HepG2 (cell line): ENCODE measurements at regions of chr6 and their contacts with region 1.

Region 1: DNA sequence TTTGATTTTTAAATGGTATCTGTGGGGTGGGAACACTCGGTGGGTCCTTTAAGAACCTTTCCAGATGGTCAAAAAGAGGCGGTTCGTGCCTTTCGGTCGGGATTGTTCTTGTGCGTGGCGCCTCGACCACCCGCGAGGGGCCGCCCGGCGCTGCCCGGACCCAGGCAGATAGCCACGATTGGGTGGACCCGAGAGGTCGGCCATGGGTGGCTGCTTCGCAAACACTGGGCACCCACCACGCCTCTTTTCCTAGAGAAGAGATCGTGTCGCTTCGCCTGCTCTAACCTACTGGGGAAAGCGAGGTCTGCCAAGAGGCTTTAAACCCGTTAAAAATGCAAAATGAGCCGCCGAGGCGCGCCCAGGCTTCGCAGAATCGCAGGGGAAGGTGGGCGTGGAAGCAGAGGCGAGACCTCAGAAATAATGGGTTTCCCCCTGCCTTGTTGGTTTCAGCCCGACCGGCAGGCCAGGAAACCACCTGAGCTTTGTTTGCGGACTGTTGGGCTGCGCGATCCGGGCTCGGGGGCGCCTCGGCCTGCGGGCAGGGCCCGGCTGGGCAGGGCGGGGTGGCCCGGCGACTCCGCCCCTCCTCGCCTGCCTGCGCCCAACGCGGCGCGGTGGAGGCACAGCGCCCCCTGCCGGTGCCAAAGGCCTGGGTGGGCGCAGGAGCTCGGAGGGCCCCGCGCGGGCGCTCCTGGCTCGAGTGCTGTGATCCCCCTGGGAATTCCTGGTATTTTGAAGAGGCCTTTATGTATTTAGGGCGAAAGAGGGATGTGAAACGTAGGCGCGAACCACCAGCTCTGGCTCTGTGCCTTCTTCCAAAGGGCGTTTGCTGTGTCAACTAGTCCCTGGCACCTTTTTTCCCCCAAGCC is 1.6 kb downstream of the MARCKS start:
- DNase-seq: peak; percentile 89
- ATAC-seq: peak; percentile 91
- H3K4me3 ChIP-seq: peak overlapping the region; percentile 88 to 100 (median 97)
- H3K27ac ChIP-seq: peak overlapping the region; percentile 98
- H3K4me1 ChIP-seq: peaks cover 39% of the 10 kb centered on the region
- H3K27me3 ChIP-seq: peaks cover 0 to 8% of the 10 kb centered on the region in 2 experiments; a peak in 3 of 5 replicates
- CTCF ChIP-seq: peak; percentile 89
- EP300 ChIP-seq: peak; percentile 41 to 63; a peak in 3 of 4 replicates
- POLR2A ChIP-seq: peak; percentile 75 to 76; a peak in 3 of 4 replicates
- RAD21 ChIP-seq: peak; percentile 99

Region 2: GRCh38 chr6:112879920-112880413 is 978.7 kb before region 1 on chr6:
- CTCF ChIA-PET with region 1: no interaction called
- POLR2A ChIA-PET with region 1: interaction called, 13 read pairs
- in situ Hi-C with region 1: no loop called
- intact Hi-C with region 1: loop called (anchors 2 kb)
- DNase-seq: peak; percentile 85
- ATAC-seq: peak; percentile 100
- H3K4me3 ChIP-seq: peak overlapping the region; percentile 57 to 79 (median 79)
- H3K27ac ChIP-seq: no peak overlapping the region
- H3K4me1 ChIP-seq: 0 out of 2 replicates have a peak, but pooled peaks cover 6% of the 10 kb centered on the region
- H3K27me3 ChIP-seq: no peaks in the 10 kb centered on the region; a peak in 1 of 5 replicates
- CTCF ChIP-seq: peak; percentile 99
- EP300 ChIP-seq: no peak
- POLR2A ChIP-seq: peak; percentile 30 to 73; a peak in 2 of 4 replicates
- RAD21 ChIP-seq: peak; percentile 97

Region 3: GRCh38 chr6:113352029-113352801 is 506.5 kb before region 1 on chr6:
- CTCF ChIA-PET with region 1: no interaction called
- POLR2A ChIA-PET with region 1: interaction called, 44 read pairs
- in situ Hi-C with region 1: loop called (anchors 5 kb)
- intact Hi-C with region 1: loop called (anchors 2 kb)
- DNase-seq: peak; percentile 100
- ATAC-seq: peak; percentile 94
- H3K4me3 ChIP-seq: peak overlapping the region in 1 of 3 experiments; percentile 20; a peak in 1 of 6 replicates
- H3K27ac ChIP-seq: peak overlapping the region; percentile 91
- H3K4me1 ChIP-seq: peaks cover 75% of the 10 kb centered on the region
- H3K27me3 ChIP-seq: no peaks in the 10 kb centered on the region; a peak in 1 of 5 replicates
- CTCF ChIP-seq: no peak
- EP300 ChIP-seq: peak; percentile 97 to 100
- POLR2A ChIP-seq: no peak
- RAD21 ChIP-seq: no peak

Region 4: GRCh38 chr6:113564371-113565161 is 294.1 kb before region 1 on chr6:
- CTCF ChIA-PET with region 1: no interaction called
- POLR2A ChIA-PET with region 1: no interaction called
- in situ Hi-C with region 1: no loop called
- intact Hi-C with region 1: loop called (anchors 5 kb)
- DNase-seq: peak; percentile 74
- ATAC-seq: peak; percentile 99
- H3K4me3 ChIP-seq: peak overlapping the region in 2 of 3 experiments; percentile 8 to 19; a peak in 3 of 6 replicates
- H3K27ac ChIP-seq: peak overlapping the region; percentile 50
- H3K4me1 ChIP-seq: peaks cover 19% of the 10 kb centered on the region
- H3K27me3 ChIP-seq: no peaks in the 10 kb centered on the region; a peak in 1 of 5 replicates
- CTCF ChIP-seq: no peak
- EP300 ChIP-seq: peak in 1 of 2 experiments; percentile 85; a peak in 2 of 4 replicates
- POLR2A ChIP-seq: no peak
- RAD21 ChIP-seq: no peak

Region 5: DNA sequence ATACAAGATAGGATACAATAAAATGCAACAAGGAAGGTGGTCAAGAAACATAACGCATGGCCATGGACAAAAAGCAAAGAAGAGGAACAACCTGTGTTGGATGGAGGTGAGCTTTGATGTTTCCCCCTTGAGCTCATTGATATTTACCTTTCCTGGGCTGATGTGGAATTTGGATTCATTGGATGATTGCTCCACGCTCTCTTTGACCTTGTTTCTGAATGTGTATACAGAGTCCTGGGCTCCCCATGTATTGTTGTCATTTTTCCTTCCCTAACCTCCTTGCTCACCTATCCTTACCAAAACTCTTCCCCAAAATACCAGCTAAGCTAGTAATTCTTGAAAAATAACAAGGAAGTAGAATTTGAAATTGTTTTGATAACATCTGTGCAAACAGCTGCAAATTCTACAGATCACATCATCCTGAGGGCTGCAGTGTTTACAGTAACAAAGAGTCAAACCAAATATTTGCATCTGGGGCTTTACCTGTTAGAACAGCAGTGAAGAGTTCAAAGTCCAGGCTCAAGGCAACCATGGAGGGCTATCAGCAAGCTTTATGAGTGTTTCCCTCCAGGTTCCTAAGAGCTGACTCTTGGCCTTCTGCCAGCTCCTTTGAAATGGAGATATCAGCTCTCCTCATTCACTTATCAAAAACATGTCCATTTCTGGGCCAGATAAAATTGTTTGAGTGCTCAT is 215.9 kb before region 1 on chr6:
- CTCF ChIA-PET with region 1: no interaction called
- POLR2A ChIA-PET with region 1: interaction called, 82 read pairs
- in situ Hi-C with region 1: no loop called
- intact Hi-C with region 1: loop called (anchors 1 kb)
- DNase-seq: peak; percentile 100
- ATAC-seq: peak; percentile 94
- H3K4me3 ChIP-seq: peak overlapping the region in 1 of 3 experiments; percentile 44; a peak in 1 of 6 replicates
- H3K27ac ChIP-seq: peak overlapping the region; percentile 99
- H3K4me1 ChIP-seq: peaks cover 75% of the 10 kb centered on the region
- H3K27me3 ChIP-seq: no peaks in the 10 kb centered on the region
- CTCF ChIP-seq: no peak
- EP300 ChIP-seq: peak; percentile 48 to 94; a peak in 3 of 4 replicates
- POLR2A ChIP-seq: peak; percentile 49 to 53; a peak in 3 of 4 replicates
- RAD21 ChIP-seq: no peak

Region 6: DNA sequence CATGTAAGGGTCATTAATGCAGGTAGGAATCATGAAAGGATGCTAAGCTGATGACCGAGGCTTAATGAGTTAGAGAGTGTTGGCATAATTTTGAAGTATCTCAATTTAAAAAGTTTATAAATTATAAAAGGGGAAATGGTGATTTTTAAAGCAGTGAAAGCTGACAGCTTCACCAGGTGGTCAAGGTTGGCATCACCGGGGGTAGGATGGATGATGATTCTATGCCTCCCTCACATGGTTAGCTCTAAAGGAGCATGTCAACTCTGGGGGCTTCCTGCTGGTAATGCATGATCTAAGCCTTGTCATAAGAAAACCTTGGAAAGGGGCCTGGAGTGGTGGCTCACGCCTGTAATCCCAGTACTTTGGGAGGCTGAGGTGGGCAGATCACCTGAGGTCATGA is 90.7 kb before region 1 on chr6:
- CTCF ChIA-PET with region 1: no interaction called
- POLR2A ChIA-PET with region 1: no interaction called
- in situ Hi-C with region 1: no loop called
- intact Hi-C with region 1: no loop called
- DNase-seq: no peak
- ATAC-seq: no peak
- H3K4me3 ChIP-seq: no peak overlapping the region
- H3K27ac ChIP-seq: no peak overlapping the region
- H3K4me1 ChIP-seq: no peaks in the 10 kb centered on the region
- H3K27me3 ChIP-seq: peaks cover 0 to 3% of the 10 kb centered on the region in 2 experiments; a peak in 2 of 5 replicates
- CTCF ChIP-seq: no peak
- EP300 ChIP-seq: no peak
- POLR2A ChIP-seq: no peak
- RAD21 ChIP-seq: no peak

Region 7: GRCh38 chr6:113873043-113873667 is 14.4 kb after region 1 on chr6:
- CTCF ChIA-PET with region 1: no interaction called
- POLR2A ChIA-PET with region 1: interaction called, 21 read pairs
- in situ Hi-C with region 1: no loop called
- intact Hi-C with region 1: loop called (anchors 1 kb)
- DNase-seq: peak; percentile 88
- ATAC-seq: peak; percentile 97
- H3K4me3 ChIP-seq: peak overlapping the region; percentile 73 to 80 (median 77)
- H3K27ac ChIP-seq: peak overlapping the region; percentile 73
- H3K4me1 ChIP-seq: peaks cover 30% of the 10 kb centered on the region
- H3K27me3 ChIP-seq: no peaks in the 10 kb centered on the region
- CTCF ChIP-seq: peak; percentile 33; the same call in 1 of the 2 replicates
- EP300 ChIP-seq: peak in 1 of 2 experiments; percentile 27; a peak in 1 of 4 replicates
- POLR2A ChIP-seq: peak in 1 of 2 experiments; percentile 24; a peak in 2 of 4 replicates
- RAD21 ChIP-seq: no peak